Activated CD4-positive, alpha-beta T cell treated with anti-CD3 and anti-CD28 coated beads for 36 hours (primary cell): ENCODE measurements at regions of chr1 and their contacts with region 1.

Region 1: GRCh38 chr1:66519988-66520387 is 14.0 kb upstream of the SGIP1 start:
- DNase-seq: no peak
- ATAC-seq: no peak
- H3K4me3 Mint-ChIP-seq: no peak overlapping the region
- H3K27ac Mint-ChIP-seq: no peak overlapping the region
- H3K4me1 Mint-ChIP-seq: no peaks in the 10 kb centered on the region
- H3K27me3 Mint-ChIP-seq: peaks cover 3% of the 10 kb centered on the region

Region 2: DNA sequence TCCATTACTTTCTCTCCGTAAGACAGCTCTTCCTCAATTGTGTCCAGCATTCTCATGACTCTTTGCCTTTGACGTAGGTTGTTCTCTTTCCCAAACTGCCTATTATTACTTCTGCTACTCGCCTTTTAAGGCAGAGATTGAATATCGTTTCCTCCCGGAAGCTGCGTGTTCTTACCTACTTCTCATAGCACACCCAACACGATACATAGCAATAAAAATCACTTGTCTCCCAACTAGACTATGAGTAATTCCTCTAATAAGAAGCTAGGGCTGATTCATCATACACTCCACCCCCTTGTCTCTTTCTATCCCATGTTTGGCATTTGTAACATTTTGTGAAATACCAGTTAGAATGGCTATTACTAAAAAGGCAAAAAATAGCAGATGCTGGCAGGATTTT is 41.9 kb before region 1 on chr1:
- CTCF ChIA-PET with region 1: no interaction called
- POLR2A ChIA-PET with region 1: no interaction called
- intact Hi-C with region 1: no loop called
- DNase-seq: no peak
- ATAC-seq: no peak
- H3K4me3 Mint-ChIP-seq: no peak overlapping the region
- H3K27ac Mint-ChIP-seq: no peak overlapping the region
- H3K4me1 Mint-ChIP-seq: no peaks in the 10 kb centered on the region
- H3K27me3 Mint-ChIP-seq: peaks cover 11% of the 10 kb centered on the region

Region 3: GRCh38 chr1:66563094-66563800 is 43.3 kb after region 1 on chr1:
- CTCF ChIA-PET with region 1: no interaction called
- POLR2A ChIA-PET with region 1: no interaction called
- intact Hi-C with region 1: loop called in 1 of 2 experiments (anchors 5 kb)
- DNase-seq: no peak
- ATAC-seq: no peak
- H3K4me3 Mint-ChIP-seq: no peak overlapping the region
- H3K27ac Mint-ChIP-seq: no peak overlapping the region
- H3K4me1 Mint-ChIP-seq: no peaks in the 10 kb centered on the region
- H3K27me3 Mint-ChIP-seq: peaks cover 3% of the 10 kb centered on the region

Region 4: DNA sequence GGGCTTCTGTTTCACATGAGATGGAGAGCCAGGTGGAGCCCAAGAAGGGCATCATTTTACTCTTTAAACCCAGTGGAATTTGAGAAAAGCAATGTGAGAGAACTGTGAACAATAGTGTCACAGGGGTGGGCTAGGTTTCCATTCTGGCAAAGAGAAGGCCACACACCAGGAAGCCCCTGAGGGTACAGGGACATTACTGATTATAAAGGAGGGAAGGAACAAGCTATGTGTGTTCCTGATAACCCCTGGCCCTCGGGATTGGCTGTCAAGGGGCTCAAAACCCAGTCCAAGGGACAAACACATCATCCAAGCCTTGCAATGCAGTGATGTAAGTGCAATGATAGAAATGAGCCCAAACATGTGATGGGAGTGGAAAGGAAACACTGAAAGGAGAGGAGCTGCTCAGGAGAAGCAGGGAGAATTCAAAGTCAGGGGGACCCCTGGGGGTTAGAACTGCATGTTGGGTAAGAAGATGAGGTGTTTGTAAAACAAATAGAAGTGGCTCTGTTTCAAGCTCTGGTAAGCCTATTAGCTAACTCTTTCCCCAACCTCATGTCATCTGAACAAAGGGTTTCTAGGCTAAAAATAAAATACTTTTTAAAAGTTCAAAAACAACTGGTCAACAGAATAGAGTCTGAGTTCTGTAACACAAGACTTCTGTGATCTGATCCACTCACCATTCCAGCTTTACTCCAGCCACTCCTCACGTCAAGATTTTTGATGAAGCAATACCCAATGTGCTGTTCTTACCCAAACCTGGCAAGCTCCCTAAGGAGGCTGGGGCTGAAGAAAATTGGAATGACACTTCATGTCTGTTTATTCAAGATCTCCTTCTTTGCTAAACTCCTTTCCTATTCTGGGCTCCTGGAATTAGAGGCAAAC is 736.5 kb after region 1 on chr1:
- CTCF ChIA-PET with region 1: no interaction called
- POLR2A ChIA-PET with region 1: no interaction called
- intact Hi-C with region 1: no loop called
- DNase-seq: no peak
- ATAC-seq: no peak
- H3K4me3 Mint-ChIP-seq: no peak overlapping the region
- H3K27ac Mint-ChIP-seq: no peak overlapping the region
- H3K4me1 Mint-ChIP-seq: peaks cover 1% of the 10 kb centered on the region
- H3K27me3 Mint-ChIP-seq: peaks cover 2% of the 10 kb centered on the region